ENCODE measurements at regions of chr9 and their contacts with region 1.

Region 1: DNA sequence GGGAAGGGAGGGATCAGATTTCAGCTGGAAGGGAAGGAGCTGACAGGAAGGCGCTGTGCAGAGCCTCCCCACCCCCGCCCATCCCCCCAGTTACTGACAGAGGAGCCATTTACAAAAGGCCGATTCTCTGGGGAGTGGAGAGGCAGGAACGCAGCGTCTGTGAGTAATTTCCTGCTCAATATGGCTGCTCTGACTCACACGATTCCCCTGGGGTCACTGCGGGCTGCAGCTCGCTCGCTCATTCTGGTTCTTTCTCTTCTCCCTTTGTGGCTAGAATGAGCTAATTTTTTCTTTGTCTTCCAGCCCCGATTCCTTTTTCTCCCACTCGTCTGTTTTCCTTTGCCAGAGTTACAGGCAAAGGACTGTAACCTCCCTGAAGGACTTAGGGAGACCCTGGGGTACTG is 28.8 kb downstream of the PTPA start:
- DNase-seq: peak; percentile 77
- ATAC-seq: peak; percentile 83
- H3K4me3 Mint-ChIP-seq: peak overlapping the region; percentile 81
- H3K27ac Mint-ChIP-seq: peak overlapping the region; percentile 91
- H3K4me1 Mint-ChIP-seq: peaks cover 50% of the 10 kb centered on the region
- H3K27me3 Mint-ChIP-seq: no peaks in the 10 kb centered on the region
- CTCF ChIP-seq: no peak

Region 2: DNA sequence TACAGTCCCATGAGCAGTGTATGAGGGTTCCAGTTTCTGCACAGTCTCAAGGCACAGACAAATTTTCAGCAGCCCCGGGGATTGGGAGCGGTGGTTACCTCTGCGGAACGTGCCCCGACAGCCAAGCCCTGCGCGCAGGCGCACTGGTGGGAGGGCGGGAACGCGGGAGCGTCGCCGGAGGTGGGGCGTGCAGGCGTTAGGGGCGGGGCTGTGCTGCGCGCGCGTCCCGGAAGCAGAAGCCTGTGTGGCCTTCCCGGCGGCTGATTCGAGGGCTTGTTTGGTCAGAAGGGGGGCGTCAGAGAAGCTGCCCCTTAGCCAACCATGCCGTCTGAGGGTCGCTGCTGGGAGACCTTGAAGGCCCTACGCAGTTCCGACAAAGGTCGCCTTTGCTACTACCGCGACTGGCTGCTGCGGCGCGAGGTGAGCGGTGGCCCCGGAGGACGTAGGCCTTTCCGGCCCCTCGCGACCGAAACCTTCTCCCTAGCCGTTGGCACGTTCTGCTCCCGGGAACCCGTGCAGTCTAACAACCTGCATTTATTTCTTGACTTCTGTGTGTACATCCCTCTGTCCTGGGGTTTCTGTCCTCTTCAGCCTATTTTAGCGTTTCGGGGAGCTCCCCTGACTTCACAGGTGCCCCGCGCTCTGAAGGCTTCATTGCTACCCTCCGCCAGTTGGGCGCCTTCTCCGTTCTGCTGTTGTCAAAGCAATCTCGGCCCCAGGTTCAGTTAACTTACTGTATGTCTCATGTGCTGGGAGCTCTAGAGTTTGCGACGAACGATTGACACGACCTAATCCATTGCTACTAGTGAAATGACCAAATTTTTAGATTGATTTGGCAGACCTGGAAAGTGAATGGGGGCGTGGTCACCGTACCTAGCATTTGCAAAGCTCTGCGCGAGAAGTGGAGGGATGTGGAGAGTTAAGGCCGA is 635.2 kb before region 1 on chr9 and contains the start of gene GLE1:
- CTCF ChIA-PET with region 1: no interaction called
- POLR2A ChIA-PET with region 1: no interaction called
- intact Hi-C with region 1: no loop called
- DNase-seq: peak; percentile 99
- ATAC-seq: peak; percentile 95
- H3K4me3 Mint-ChIP-seq: peak within 1 kb of the TSS; percentile 99
- H3K27ac Mint-ChIP-seq: peak within 1 kb of the TSS; percentile 98
- H3K4me1 Mint-ChIP-seq: peaks cover 24% of the 10 kb centered on the region
- H3K27me3 Mint-ChIP-seq: no peaks in the 10 kb centered on the region
- CTCF ChIP-seq: no peak
- total RNA-seq, gene GLE1: 28.8 and 31.8 TPM in 2 replicates

Region 3: DNA sequence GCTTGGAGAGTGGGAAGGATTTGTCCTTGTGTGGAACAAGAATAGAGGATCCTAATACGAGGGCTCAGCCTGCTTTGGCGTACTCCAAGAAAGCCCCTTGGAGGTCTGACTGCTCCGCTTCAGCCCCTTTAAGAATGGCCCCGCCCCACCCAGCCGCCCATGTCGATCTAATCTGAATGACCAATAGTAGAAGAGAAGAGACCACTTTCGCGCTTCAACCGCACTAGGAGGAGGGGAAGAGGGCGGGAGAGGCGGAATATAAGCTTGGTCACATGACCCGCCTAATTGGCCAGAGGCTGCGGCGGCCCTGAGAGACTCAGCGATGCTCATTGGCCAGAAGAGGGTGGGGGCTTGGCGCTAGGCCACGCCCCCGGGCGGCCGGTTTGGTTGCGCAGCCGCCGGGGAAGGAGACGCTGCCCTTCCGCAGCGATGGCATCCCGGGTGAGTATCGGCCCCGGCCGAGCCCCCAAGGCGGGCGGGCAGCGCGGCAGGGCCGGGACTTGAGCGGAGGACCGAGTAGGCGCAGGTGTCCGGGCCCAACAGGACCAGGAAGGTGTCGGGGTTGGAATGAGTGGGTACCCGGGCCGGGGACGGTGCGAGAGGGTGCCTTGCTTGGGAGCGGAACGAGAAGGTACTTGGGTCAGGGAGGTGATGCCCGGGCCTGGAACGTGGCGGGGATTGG is 103.6 kb before region 1 on chr9 and contains the start of gene MIGA2:
- CTCF ChIA-PET with region 1: no interaction called
- POLR2A ChIA-PET with region 1: no interaction called
- intact Hi-C with region 1: no loop called
- DNase-seq: peak; percentile 89
- ATAC-seq: peak; percentile 99
- H3K4me3 Mint-ChIP-seq: peak within 1 kb of the TSS; percentile 96
- H3K27ac Mint-ChIP-seq: peak within 1 kb of the TSS; percentile 82
- H3K4me1 Mint-ChIP-seq: peaks cover 29% of the 10 kb centered on the region
- H3K27me3 Mint-ChIP-seq: no peaks in the 10 kb centered on the region
- CTCF ChIP-seq: no peak
- total RNA-seq, gene MIGA2: 42.1 and 50.0 TPM in 2 replicates

Region 4: GRCh38 chr9:129150672-129151211 is 10.7 kb after region 1 on chr9:
- CTCF ChIA-PET with region 1: interaction called, 14 read pairs
- POLR2A ChIA-PET with region 1: interaction called, 8 read pairs
- intact Hi-C with region 1: no loop called
- DNase-seq: no peak
- ATAC-seq: no peak
- H3K4me3 Mint-ChIP-seq: no peak overlapping the region
- H3K27ac Mint-ChIP-seq: no peak overlapping the region
- H3K4me1 Mint-ChIP-seq: peaks cover 17% of the 10 kb centered on the region
- H3K27me3 Mint-ChIP-seq: no peaks in the 10 kb centered on the region
- CTCF ChIP-seq: no peak

Region 5: DNA sequence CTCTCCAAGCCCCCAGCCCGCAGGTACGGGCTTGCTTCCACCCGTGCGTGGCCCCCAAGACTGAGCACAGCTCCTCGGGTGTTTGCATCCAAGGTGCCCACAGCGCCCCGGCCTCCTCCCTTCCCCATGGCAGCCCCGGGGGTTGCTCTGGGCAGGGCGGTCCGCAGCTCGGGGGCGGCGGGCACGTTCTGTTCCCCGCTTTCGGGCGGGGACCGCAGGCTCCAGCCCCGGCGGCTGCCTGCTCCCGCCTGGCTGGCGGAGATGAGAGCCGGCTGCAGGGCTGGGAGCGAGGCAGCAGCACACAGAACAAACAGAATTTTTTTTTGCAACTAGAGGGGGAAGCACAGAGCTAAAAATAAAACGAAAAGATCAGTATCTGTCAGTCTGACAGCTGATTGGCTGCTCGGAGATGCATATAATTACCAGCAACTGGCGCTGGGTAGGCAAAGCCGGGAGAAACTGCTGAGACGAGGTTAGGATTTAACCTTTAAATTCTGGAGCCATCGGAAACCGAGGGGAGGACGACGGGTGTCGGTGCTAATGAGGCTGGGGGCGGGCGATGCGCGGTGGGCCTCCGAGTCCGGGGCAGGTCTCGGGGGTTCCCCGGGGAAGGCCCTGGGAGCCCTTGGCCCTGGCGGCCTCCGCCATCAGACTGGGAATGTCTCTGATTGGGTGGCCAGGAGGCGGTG is 180.7 kb after region 1 on chr9:
- CTCF ChIA-PET with region 1: interaction called, 7 read pairs
- POLR2A ChIA-PET with region 1: interaction called, 5 read pairs
- intact Hi-C with region 1: loop called (anchors 2 kb)
- DNase-seq: peak; percentile 42
- ATAC-seq: peak; percentile 88
- H3K4me3 Mint-ChIP-seq: peak overlapping the region; percentile 85
- H3K27ac Mint-ChIP-seq: peak overlapping the region; percentile 52
- H3K4me1 Mint-ChIP-seq: peaks cover 13% of the 10 kb centered on the region
- H3K27me3 Mint-ChIP-seq: peaks cover 5% of the 10 kb centered on the region
- CTCF ChIP-seq: no peak

Region 6: GRCh38 chr9:129460323-129461261 is 320.6 kb after region 1 on chr9:
- CTCF ChIA-PET with region 1: interaction called, 9 read pairs
- POLR2A ChIA-PET with region 1: interaction called, 19 read pairs
- intact Hi-C with region 1: loop called (anchors 1 kb)
- DNase-seq: peak; percentile 70
- ATAC-seq: peak; percentile 85
- H3K4me3 Mint-ChIP-seq: peak overlapping the region; percentile 79
- H3K27ac Mint-ChIP-seq: peak overlapping the region; percentile 83
- H3K4me1 Mint-ChIP-seq: peaks cover 22% of the 10 kb centered on the region
- H3K27me3 Mint-ChIP-seq: peaks cover 5% of the 10 kb centered on the region
- CTCF ChIP-seq: no peak

Region 7: GRCh38 chr9:129626079-129626624 is 486.2 kb after region 1 on chr9 and contains the start of gene NTMT1:
- CTCF ChIA-PET with region 1: interaction called, 38 read pairs
- POLR2A ChIA-PET with region 1: interaction called, 62 read pairs
- intact Hi-C with region 1: loop called (anchors 1 kb)
- DNase-seq: peak; percentile 92
- ATAC-seq: peak; percentile 81
- H3K4me3 Mint-ChIP-seq: peak within 1 kb of the TSS; percentile 89
- H3K27ac Mint-ChIP-seq: peak within 1 kb of the TSS; percentile 88
- H3K4me1 Mint-ChIP-seq: peaks cover 54% of the 10 kb centered on the region
- H3K27me3 Mint-ChIP-seq: peaks cover 7% of the 10 kb centered on the region
- CTCF ChIP-seq: no peak
- total RNA-seq, gene NTMT1: 33.1 and 40.1 TPM in 2 replicates

Region 8: GRCh38 chr9:129884220-129885017 is 744.4 kb after region 1 on chr9:
- CTCF ChIA-PET with region 1: interaction called, 3 read pairs
- POLR2A ChIA-PET with region 1: no interaction called
- intact Hi-C with region 1: loop called (anchors 1 kb)
- DNase-seq: peak; percentile 92
- ATAC-seq: peak; percentile 61
- H3K4me3 Mint-ChIP-seq: peak overlapping the region; percentile 84
- H3K27ac Mint-ChIP-seq: peak overlapping the region; percentile 98
- H3K4me1 Mint-ChIP-seq: peaks cover 59% of the 10 kb centered on the region
- H3K27me3 Mint-ChIP-seq: no peaks in the 10 kb centered on the region
- CTCF ChIP-seq: no peak

Measured in activated B cell treated with CpG ODN at 0.5 μM for 24 hours (primary cell).